Activated B cell treated with CpG ODN at 0.5 μM for 24 hours (primary cell): ENCODE measurements at regions of chr1 and their contacts with region 1.

Region 1: DNA sequence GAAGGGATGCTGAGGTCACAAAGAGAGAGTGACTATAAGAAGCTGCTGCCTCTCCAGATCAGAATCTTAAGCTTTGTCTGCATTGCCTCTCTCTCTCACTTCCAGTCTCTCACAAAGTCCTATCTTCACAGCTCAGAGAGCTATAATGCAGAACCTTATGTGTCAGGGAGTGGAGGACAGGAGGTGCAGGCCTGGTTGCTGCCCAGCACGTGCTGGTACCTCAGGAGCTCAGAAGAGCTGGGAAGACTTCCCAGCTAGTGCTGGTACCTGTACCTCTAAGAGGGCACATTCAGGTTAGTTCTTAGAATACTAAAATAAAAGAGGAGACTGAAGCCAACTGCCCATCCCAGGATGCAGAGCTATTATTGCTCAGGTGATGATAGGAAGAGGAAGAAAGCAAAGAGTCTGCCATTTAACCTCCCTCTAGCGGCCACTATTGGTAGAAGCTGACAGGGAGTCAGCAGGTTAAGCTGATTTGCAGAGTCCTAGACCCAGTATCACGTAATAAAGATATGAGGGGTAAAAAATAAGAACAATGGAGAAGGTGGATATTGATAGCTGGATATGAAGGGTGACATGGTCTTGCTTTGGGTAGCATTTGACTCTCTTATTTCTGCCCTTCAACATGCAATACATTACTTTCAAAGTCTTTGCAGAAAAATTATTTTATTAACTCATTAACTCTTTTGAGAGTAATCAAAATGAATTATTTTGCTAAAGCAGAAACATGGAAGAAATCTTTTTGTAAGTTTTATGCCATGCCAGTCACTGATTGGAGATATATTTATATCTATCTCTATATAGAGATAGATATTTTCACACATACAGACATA is 138.1 kb upstream of the HMCN1 start:
- DNase-seq: no peak
- ATAC-seq: peak; percentile 73
- H3K4me3 Mint-ChIP-seq: no peak overlapping the region
- H3K27ac Mint-ChIP-seq: peak overlapping the region; percentile 26
- H3K4me1 Mint-ChIP-seq: peaks cover 38% of the 10 kb centered on the region
- H3K27me3 Mint-ChIP-seq: no peaks in the 10 kb centered on the region
- CTCF ChIP-seq: peak; percentile 55

Region 2: GRCh38 chr1:185559684-185560331 is 36.2 kb before region 1 on chr1:
- CTCF ChIA-PET with region 1: interaction called, 14 read pairs
- POLR2A ChIA-PET with region 1: interaction called, 4 read pairs
- intact Hi-C with region 1: no loop called
- DNase-seq: no peak
- ATAC-seq: peak; percentile 90
- H3K4me3 Mint-ChIP-seq: no peak overlapping the region
- H3K27ac Mint-ChIP-seq: peak overlapping the region; percentile 74
- H3K4me1 Mint-ChIP-seq: peaks cover 27% of the 10 kb centered on the region
- H3K27me3 Mint-ChIP-seq: no peaks in the 10 kb centered on the region
- CTCF ChIP-seq: no peak

Region 3: DNA sequence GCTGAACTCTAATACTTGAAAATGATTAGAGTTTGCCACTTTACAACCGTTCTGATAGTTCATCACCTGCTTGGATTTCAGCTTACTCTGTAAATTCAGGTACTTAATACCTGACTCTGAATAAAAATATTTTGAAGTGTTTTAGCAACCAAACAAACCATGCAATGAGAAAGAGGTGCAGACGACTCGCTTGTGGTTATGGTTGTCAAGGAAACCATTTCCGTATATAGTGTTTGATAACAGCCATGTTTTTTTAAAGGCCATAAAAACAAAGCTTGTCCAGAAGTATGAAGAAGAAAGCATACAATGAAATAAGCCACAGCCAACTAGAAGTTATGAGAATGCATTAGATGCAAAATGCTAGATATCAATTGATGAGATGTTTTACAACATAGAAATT is 29.1 kb before region 1 on chr1:
- CTCF ChIA-PET with region 1: interaction called, 14 read pairs
- POLR2A ChIA-PET with region 1: no interaction called
- intact Hi-C with region 1: no loop called
- DNase-seq: no peak
- ATAC-seq: peak; percentile 80
- H3K4me3 Mint-ChIP-seq: peak overlapping the region; percentile 13
- H3K27ac Mint-ChIP-seq: peak overlapping the region; percentile 74
- H3K4me1 Mint-ChIP-seq: peaks cover 30% of the 10 kb centered on the region
- H3K27me3 Mint-ChIP-seq: no peaks in the 10 kb centered on the region
- CTCF ChIP-seq: no peak

Region 4: DNA sequence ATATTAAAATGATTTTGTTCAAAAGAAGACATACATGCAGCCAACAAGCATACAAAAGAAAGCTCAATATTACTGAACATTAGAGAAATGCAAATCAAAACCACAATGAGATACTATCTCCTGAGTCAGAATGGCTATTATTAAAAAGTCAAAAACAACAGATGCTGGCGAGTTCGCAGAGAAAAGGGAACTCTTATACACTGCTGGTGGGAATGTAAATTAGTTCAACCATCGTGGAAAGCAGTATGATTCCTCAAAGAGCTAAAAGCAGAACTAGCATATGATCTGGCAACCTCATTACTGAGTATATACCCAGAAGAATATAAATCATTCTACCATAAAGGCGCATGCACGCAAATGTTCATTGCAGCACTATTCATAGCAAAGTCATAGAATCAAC is 12.1 kb after region 1 on chr1:
- CTCF ChIA-PET with region 1: interaction called, 13 read pairs
- POLR2A ChIA-PET with region 1: interaction called, 15 read pairs
- intact Hi-C with region 1: loop called (anchors 1 kb)
- DNase-seq: no peak
- ATAC-seq: peak; percentile 83
- H3K4me3 Mint-ChIP-seq: no peak overlapping the region
- H3K27ac Mint-ChIP-seq: peak overlapping the region; percentile 26
- H3K4me1 Mint-ChIP-seq: peaks cover 63% of the 10 kb centered on the region
- H3K27me3 Mint-ChIP-seq: no peaks in the 10 kb centered on the region
- CTCF ChIP-seq: no peak

Region 5: DNA sequence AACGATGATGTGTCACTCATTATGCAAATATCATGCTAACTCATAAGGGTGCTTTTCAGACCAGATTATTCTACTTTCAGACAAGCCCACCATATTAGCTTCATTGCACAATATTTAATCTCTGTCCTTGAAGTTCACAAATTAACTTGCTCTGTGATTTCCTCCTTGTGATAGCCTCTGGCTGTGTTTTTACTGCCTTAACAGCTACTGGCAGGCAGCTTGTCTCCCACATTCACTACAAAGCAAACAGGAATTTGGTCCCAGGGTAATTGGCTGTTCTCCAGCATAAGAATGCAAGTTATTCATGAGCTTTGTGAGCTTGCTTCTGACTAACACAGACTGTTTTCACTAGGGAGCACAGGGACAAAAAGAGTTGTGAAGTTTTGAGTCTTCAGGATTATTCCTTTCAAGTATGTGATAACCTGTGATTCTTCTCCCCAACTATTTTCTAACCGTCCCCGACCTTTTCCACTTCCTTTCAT is 50.2 kb after region 1 on chr1:
- CTCF ChIA-PET with region 1: interaction called, 7 read pairs
- POLR2A ChIA-PET with region 1: interaction called, 13 read pairs
- intact Hi-C with region 1: no loop called
- DNase-seq: no peak
- ATAC-seq: no peak
- H3K4me3 Mint-ChIP-seq: no peak overlapping the region
- H3K27ac Mint-ChIP-seq: no peak overlapping the region
- H3K4me1 Mint-ChIP-seq: peaks cover 16% of the 10 kb centered on the region
- H3K27me3 Mint-ChIP-seq: no peaks in the 10 kb centered on the region
- CTCF ChIP-seq: no peak

Region 6: GRCh38 chr1:185681034-185681633 is 85.1 kb after region 1 on chr1:
- CTCF ChIA-PET with region 1: interaction called, 27 read pairs
- POLR2A ChIA-PET with region 1: no interaction called
- intact Hi-C with region 1: no loop called
- DNase-seq: no peak
- ATAC-seq: peak; percentile 67
- H3K4me3 Mint-ChIP-seq: no peak overlapping the region
- H3K27ac Mint-ChIP-seq: no peak overlapping the region
- H3K4me1 Mint-ChIP-seq: peaks cover 19% of the 10 kb centered on the region
- H3K27me3 Mint-ChIP-seq: no peaks in the 10 kb centered on the region
- CTCF ChIP-seq: peak; percentile 50